ENCODE measurements at regions of chr22 and their contacts with region 1.

Region 1: GRCh38 chr22:36301384-36301828 is 48.5 kb downstream of the APOL1 start:
- DNase-seq: no peak
- H3K4me3 ChIP-seq: no peak overlapping the region
- CTCF ChIP-seq: peak; percentile 88

Region 2: GRCh38 chr22:36286471-36287224 is 14.8 kb before region 1 on chr22:
- CTCF ChIA-PET with region 1: interaction called, 202 read pairs
- POLR2A ChIA-PET with region 1: interaction called, 3 read pairs
- DNase-seq: no peak
- H3K4me3 ChIP-seq: no peak overlapping the region
- CTCF ChIP-seq: peak; percentile 88

Region 3: GRCh38 chr22:36311386-36312358 is 10.3 kb after region 1 on chr22:
- CTCF ChIA-PET with region 1: interaction called, 56 read pairs
- POLR2A ChIA-PET with region 1: interaction called, 8 read pairs
- DNase-seq: no peak
- H3K4me3 ChIP-seq: no peak overlapping the region
- CTCF ChIP-seq: no peak

Region 4: DNA sequence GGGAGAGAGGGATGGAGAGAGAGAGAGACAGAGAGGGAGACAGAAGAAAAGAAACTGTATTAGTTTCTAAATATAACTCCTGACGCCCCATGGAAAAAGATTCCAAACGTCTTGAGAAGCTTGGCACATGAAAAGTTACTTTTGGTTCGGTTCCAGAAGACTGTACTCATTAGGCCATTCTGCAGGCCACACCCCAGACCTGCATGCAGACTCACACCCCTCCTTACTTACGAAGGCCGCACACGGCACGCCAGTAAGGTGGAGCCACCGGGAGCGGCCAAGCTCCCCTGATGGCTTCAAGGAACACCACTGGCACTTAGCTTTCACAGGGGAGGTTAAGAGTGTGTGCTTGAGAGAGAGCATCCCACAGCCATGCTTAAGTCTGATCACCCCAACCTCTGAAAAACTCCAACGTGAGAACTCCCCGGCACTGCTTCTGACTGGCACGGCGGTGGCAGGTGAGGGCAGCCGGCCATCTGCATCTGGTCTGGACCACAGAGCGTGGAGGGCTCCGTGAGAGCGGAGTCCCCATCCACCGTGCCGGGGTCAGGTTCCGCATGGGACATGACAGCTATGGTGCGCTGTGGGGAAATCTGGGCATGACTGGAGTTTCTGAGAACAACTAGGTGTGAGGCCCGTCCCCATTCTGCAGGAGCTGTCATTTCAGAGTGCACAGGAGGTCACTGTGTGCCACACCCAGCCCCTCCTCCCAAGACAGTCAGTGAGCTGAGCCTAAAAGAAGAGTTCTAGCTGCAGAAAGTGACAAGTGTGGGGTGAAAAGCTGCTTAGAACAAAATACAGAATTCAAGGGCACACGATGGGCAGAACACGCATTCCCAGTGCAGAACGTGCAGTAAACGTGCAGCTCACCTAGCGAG is 24.0 kb after region 1 on chr22:
- CTCF ChIA-PET with region 1: interaction called, 18 read pairs
- POLR2A ChIA-PET with region 1: interaction called, 4 read pairs
- DNase-seq: peak; percentile 72
- H3K4me3 ChIP-seq: no peak overlapping the region
- CTCF ChIP-seq: no peak

Region 5: GRCh38 chr22:36409911-36410756 is 108.7 kb after region 1 on chr22:
- CTCF ChIA-PET with region 1: no interaction called
- POLR2A ChIA-PET with region 1: no interaction called
- DNase-seq: no peak
- H3K4me3 ChIP-seq: no peak overlapping the region
- CTCF ChIP-seq: no peak

Region 6: DNA sequence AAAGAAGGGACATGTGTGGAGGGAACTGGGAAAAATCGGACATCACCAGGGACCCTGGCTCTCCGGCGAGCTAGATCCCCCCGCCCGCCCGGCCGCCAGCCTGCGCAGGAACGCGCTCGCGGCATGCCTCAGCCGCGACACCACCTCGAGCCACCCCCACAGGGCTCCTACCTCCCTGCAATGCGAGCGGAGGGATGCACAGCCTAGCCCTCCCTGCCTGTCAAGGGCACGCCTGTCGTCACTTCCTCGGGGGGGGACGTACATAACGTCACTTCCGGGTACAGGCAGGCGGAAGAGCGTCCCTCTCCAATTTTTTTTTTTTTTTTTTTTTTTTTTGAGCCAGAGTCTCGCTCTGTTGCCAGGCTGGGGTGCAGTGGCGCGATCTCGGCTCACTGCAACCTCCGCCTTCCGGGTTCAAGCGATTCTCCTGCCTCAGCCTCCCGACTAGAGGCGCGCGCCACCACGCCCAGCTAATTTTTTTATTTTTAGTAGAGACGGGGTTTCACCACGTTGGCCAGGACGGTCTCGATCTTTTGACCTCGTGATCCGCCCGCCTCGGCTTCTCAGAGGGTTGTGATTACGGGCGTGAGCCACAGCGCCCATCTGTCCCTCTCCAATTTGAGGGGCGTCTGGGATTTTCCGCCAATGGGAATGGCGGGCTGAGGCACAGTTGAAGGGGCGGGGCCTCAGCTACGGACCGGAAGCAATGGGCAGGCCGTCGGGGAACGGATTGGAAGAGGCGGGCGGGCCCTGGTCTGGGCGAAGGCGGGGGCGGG is 180.2 kb after region 1 on chr22 and contains the start of gene TXN2:
- CTCF ChIA-PET with region 1: interaction called, 44 read pairs
- POLR2A ChIA-PET with region 1: interaction called, 4 read pairs
- DNase-seq: peak; percentile 71
- H3K4me3 ChIP-seq: peak within 1 kb of the TSS; percentile 82
- CTCF ChIP-seq: no peak

Measured in AG04449 (cell line).